ENCODE measurements at regions of chr18 and their contacts with region 1.

Region 1: DNA sequence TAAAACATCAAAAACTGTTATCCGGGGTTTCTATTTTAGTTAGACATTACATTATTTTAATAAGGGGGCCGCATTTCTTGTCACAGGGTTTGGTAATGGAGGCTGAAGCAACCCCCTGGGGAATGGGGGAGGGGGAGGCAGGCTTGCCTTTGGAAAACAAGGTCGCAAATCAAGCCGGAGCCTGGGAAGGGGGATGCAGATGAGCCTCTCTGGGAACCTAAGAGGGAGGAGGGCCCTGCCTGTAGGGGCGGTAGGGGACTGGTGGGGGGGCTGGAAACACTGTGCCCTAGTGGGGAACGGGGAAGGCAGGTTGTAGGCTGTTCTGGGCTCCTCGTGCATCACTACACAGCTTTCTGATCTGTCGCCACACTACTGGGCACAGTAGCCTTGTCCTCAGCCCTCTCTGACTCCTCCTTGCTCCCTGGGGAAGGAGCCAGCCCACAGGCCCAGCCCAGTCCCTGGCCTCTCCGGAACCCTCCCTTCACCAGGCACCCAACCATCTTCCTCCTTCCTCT is 170.2 kb upstream of the SMAD2 start:
- DNase-seq: no peak
- H3K4me3 ChIP-seq: no peak overlapping the region
- H3K27ac ChIP-seq: no peak overlapping the region
- H3K4me1 ChIP-seq: no peaks in the 10 kb centered on the region
- H3K27me3 ChIP-seq: peaks cover 0 to 3% (median 0%) of the 10 kb centered on the region in 3 donors
- CTCF ChIP-seq: no peak
- EP300 ChIP-seq: no peak
- POLR2A ChIP-seq: no peak

Region 2: DNA sequence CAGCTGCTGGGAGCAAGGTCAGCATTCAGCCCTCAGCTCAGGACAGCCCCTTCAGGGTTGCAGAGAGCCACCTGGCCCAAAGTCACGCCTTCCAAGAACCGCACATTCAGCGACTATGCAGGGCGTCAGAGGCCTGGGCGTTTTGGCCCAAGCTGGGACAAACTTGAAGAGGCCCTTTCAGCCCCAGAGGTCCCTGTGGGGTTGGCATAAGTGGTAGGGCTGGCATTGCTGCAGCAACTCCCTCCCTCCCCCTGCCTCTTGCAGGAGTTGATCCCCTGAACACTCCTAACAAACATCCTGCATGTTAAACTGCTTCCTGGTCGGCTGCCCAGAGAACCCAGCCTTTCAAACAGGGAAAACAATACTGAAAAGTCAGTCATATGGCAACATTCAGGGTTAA is 22.6 kb after region 1 on chr18:
- intact Hi-C with region 1: loop called (anchors 1 kb)
- DNase-seq: peak; percentile 30
- H3K4me3 ChIP-seq: no peak overlapping the region
- H3K27ac ChIP-seq: no peak overlapping the region
- H3K4me1 ChIP-seq: no peaks in the 10 kb centered on the region
- H3K27me3 ChIP-seq: no peaks in the 10 kb centered on the region
- CTCF ChIP-seq: no peak
- EP300 ChIP-seq: no peak
- POLR2A ChIP-seq: no peak

Region 3: GRCh38 chr18:48153641-48154481 is 53.2 kb after region 1 on chr18:
- intact Hi-C with region 1: no loop called
- DNase-seq: no peak
- H3K4me3 ChIP-seq: no peak overlapping the region
- H3K27ac ChIP-seq: peak overlapping the region in 1 of 4 donors; percentile 77
- H3K4me1 ChIP-seq: peaks cover 0 to 9% (median 3%) of the 10 kb centered on the region in 4 donors
- H3K27me3 ChIP-seq: no peaks in the 10 kb centered on the region
- CTCF ChIP-seq: no peak
- EP300 ChIP-seq: no peak
- POLR2A ChIP-seq: no peak

Measured in sigmoid colon (tissue), 7 donors.